Endothelial cell of umbilical vein (primary cell): ENCODE measurements at regions of chr7 and their contacts with region 1.

Region 1: DNA sequence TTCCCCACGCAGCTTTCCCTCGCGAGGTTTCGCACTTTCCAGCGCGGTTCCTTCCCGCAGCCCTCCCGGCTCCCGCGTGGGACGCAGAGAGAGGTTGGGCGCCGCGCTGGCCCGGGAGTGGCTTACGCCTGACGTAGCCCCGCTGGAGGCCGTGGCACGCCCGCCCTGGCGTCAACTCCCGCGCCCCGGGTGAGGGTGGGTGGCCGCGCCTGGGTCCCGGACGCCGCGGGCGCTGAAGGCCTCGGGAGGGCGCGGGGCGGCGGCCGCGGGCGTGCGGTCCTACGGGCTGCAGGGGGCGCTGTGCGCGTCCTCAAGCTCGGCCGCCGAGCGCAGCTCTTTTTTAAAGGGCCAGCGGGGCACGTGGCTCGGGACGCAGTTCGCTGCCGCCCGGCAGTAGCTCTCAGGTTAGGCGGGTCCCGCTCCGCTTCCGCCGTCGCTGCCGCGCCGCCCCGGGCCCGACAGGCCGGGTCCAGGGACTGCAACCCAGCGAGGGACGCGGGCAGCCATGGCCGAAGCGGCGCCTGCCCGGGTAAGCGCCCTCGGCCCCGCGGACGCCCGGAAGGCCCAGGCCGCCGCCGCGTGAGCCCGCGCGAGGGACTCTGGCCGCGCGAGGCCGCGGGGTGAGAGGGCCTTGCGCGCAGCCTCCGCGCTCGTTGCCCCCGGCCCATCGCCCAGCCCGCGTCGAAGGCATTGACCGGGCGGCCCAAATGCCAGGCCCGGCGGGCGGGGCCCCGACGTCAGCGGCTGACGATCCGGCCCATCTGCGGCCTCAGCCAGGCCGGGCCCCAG is at the start of gene ZNF783:
- DNase-seq: peak; percentile 85
- H3K4me3 ChIP-seq: peak within 1 kb of the TSS; percentile 19 to 61 (median 44)
- H3K27ac ChIP-seq: peak within 1 kb of the TSS; percentile 55
- H3K4me1 ChIP-seq: peaks cover 3% of the 10 kb centered on the region
- H3K27me3 ChIP-seq: no peaks in the 10 kb centered on the region
- CTCF ChIP-seq: peak; percentile 71 to 87
- POLR2A ChIP-seq: no peak
- total RNA-seq, gene ZNF783: 9.2 and 9.8 TPM in 2 replicates

Region 2: DNA sequence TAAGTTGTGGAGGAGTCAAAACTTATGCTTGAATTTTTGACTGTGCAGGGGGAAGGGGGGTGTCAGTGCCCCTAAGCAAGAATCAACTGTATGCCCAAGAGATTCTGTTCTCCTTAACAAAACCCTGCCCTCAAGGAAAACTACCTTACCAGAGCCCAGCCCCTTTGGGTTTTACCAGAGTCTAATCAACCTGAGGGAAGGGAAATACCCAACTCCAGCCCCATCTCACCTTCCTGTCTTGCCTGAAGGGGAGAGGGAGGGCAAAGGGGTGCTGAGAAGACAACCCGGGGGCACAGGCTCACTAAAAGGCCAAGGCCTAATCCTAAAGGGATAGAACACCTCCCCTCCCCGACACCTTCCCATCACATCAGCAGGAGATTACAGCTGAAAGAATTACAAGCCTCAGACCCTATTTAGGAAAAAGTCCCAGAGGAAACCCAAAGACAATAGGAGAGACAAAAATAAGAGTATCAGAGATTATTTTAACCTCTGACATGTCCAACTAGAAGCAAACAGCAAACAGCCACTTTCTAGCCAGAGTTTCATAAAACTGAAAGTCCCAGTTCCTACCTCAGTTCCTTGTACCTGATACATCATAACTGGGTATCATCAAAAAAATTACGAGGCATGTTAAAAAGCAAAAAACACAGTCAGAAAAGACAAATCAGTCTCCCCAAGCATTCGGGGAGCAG is 698.3 kb before region 1 on chr7:
- CTCF ChIA-PET with region 1: no interaction called
- POLR2A ChIA-PET with region 1: no interaction called
- dilution Hi-C with region 1: no loop called
- intact Hi-C with region 1: no loop called
- DNase-seq: no peak
- H3K4me3 ChIP-seq: no peak overlapping the region
- H3K27ac ChIP-seq: no peak overlapping the region
- H3K4me1 ChIP-seq: peaks cover 3% of the 10 kb centered on the region
- H3K27me3 ChIP-seq: peaks cover 0 to 1% of the 10 kb centered on the region in 2 experiments
- CTCF ChIP-seq: no peak
- POLR2A ChIP-seq: no peak

Region 3: DNA sequence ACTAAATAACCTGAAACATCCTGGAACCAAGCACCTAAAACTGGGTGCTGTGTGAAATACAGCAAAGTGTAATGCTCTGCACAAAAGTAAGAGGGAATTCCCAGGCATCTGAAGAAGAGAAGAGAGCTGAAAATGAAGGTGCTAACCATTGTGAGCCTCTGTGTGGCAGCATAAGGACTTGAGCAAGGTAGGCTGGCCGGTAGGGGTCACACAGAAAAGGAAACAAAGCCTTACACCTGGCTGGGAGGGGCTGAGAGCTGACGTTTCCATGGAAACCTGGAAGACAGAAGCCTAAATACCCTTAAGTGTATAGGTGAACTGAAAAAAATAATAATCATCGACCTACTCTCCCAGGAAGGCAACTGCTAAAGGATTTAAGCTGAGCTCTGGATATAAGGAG is 514.7 kb before region 1 on chr7:
- CTCF ChIA-PET with region 1: no interaction called
- POLR2A ChIA-PET with region 1: no interaction called
- dilution Hi-C with region 1: no loop called
- intact Hi-C with region 1: no loop called
- DNase-seq: no peak
- H3K4me3 ChIP-seq: no peak overlapping the region
- H3K27ac ChIP-seq: no peak overlapping the region
- H3K4me1 ChIP-seq: no peaks in the 10 kb centered on the region
- H3K27me3 ChIP-seq: no peaks in the 10 kb centered on the region
- CTCF ChIP-seq: no peak
- POLR2A ChIP-seq: no peak

Region 4: GRCh38 chr7:149239345-149240191 is 22.5 kb before region 1 on chr7 and contains the start of gene ZNF212:
- CTCF ChIA-PET with region 1: interaction called, 5 read pairs
- POLR2A ChIA-PET with region 1: no interaction called
- dilution Hi-C with region 1: no loop called
- intact Hi-C with region 1: loop called (anchors 1 kb)
- DNase-seq: peak; percentile 91
- H3K4me3 ChIP-seq: peak within 1 kb of the TSS; percentile 62 to 86 (median 73)
- H3K27ac ChIP-seq: peak within 1 kb of the TSS; percentile 28
- H3K4me1 ChIP-seq: peaks cover 9% of the 10 kb centered on the region
- H3K27me3 ChIP-seq: no peaks in the 10 kb centered on the region
- CTCF ChIP-seq: peak; percentile 91 to 97
- POLR2A ChIP-seq: no peak
- total RNA-seq, gene ZNF212: 9.0 and 9.2 TPM in 2 replicates

Region 5: GRCh38 chr7:149284850-149285626 is 23.0 kb after region 1 on chr7:
- CTCF ChIA-PET with region 1: interaction called, 19 read pairs
- POLR2A ChIA-PET with region 1: interaction called, 8 read pairs
- dilution Hi-C with region 1: no loop called
- intact Hi-C with region 1: loop called (anchors 1 kb)
- DNase-seq: peak; percentile 95
- H3K4me3 ChIP-seq: peak overlapping the region; percentile 43 to 76 (median 73)
- H3K27ac ChIP-seq: no peak overlapping the region
- H3K4me1 ChIP-seq: peaks cover 9% of the 10 kb centered on the region
- H3K27me3 ChIP-seq: no peaks in the 10 kb centered on the region
- CTCF ChIP-seq: no peak
- POLR2A ChIP-seq: peak; percentile 80

Region 6: GRCh38 chr7:149422129-149422913 is 160.3 kb after region 1 on chr7:
- CTCF ChIA-PET with region 1: interaction called, 3 read pairs
- POLR2A ChIA-PET with region 1: no interaction called
- dilution Hi-C with region 1: no loop called
- intact Hi-C with region 1: loop called (anchors 1 kb)
- DNase-seq: peak; percentile 69
- H3K4me3 ChIP-seq: peak overlapping the region; percentile 26 to 42 (median 41)
- H3K27ac ChIP-seq: no peak overlapping the region
- H3K4me1 ChIP-seq: peaks cover 10% of the 10 kb centered on the region
- H3K27me3 ChIP-seq: no peaks in the 10 kb centered on the region
- CTCF ChIP-seq: peak; percentile 68 to 72
- POLR2A ChIP-seq: no peak

Region 7: GRCh38 chr7:149714050-149714909 is 452.3 kb after region 1 on chr7:
- CTCF ChIA-PET with region 1: no interaction called
- POLR2A ChIA-PET with region 1: no interaction called
- dilution Hi-C with region 1: no loop called
- intact Hi-C with region 1: loop called (anchors 5 kb)
- DNase-seq: peak; percentile 78
- H3K4me3 ChIP-seq: peak overlapping the region; percentile 38 to 86 (median 51)
- H3K27ac ChIP-seq: no peak overlapping the region
- H3K4me1 ChIP-seq: peaks cover 11% of the 10 kb centered on the region
- H3K27me3 ChIP-seq: peaks cover 0 to 4% of the 10 kb centered on the region in 2 experiments
- CTCF ChIP-seq: no peak
- POLR2A ChIP-seq: no peak